Caco-2 (cell line): ENCODE measurements at regions of chr1 and their contacts with region 1.

Region 1: DNA sequence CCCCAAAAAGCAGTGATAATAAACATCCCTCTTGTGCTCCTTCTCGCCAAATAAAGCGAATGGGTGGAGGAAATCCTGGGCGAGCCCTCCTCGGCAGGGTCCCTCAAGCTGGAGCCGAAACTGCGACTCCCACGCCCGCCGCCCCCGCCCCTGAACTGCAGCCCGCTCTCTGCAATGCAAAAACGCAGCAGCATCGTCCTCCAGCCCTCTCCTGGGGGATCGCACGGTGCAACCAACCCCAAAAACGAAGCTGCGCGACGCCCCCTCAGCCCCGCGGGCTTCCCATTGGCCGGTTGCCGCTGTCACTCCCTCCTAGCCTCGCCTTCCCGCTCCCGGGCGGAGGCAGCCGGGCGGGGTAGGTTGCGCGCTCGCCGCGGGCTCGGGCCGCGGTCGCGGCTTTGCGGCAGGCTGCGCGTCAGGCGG is at the start of gene TMCC2:
- DNase-seq: peak; percentile 85 to 87
- H3K4me3 ChIP-seq: peak within 1 kb of the TSS; percentile 66
- H3K4me3 Mint-ChIP-seq: peak within 1 kb of the TSS; percentile 83
- H3K27ac Mint-ChIP-seq: no peak within 1 kb of the TSS
- H3K4me1 ChIP-seq: no peaks in the 10 kb centered on the region
- H3K4me1 Mint-ChIP-seq: peaks cover 7% of the 10 kb centered on the region
- H3K27me3 ChIP-seq: no peaks in the 10 kb centered on the region; the same call in 1 of the 2 replicates
- H3K27me3 Mint-ChIP-seq: peaks cover 5% of the 10 kb centered on the region
- CTCF ChIP-seq: no peak
- total RNA-seq, gene TMCC2: 0.60 and 0.91 TPM in 2 replicates

Region 2: GRCh38 chr1:204588824-204589223 is 638.8 kb before region 1 on chr1:
- CTCF ChIA-PET with region 1: no interaction called
- POLR2A ChIA-PET with region 1: interaction called, 10 read pairs
- intact Hi-C with region 1: no loop called
- DNase-seq: no peak
- H3K4me3 ChIP-seq: no peak overlapping the region
- H3K4me3 Mint-ChIP-seq: no peak overlapping the region
- H3K27ac Mint-ChIP-seq: no peak overlapping the region
- H3K4me1 ChIP-seq: peaks cover 14% of the 10 kb centered on the region
- H3K4me1 Mint-ChIP-seq: peaks cover 15% of the 10 kb centered on the region
- H3K27me3 ChIP-seq: no peaks in the 10 kb centered on the region
- H3K27me3 Mint-ChIP-seq: no peaks in the 10 kb centered on the region
- CTCF ChIP-seq: no peak

Region 3: GRCh38 chr1:205211169-205211838 is 16.3 kb before region 1 on chr1 and contains the start of gene DSTYK:
- CTCF ChIA-PET with region 1: interaction called, 3 read pairs
- POLR2A ChIA-PET with region 1: no interaction called
- intact Hi-C with region 1: loop called (anchors 2 kb)
- DNase-seq: peak; percentile 93 to 94
- H3K4me3 ChIP-seq: peak within 1 kb of the TSS; percentile 89
- H3K4me3 Mint-ChIP-seq: peak within 1 kb of the TSS; percentile 97
- H3K27ac Mint-ChIP-seq: peak within 1 kb of the TSS; percentile 94
- H3K4me1 ChIP-seq: peaks cover 4% of the 10 kb centered on the region; the same call in 1 of the 2 replicates
- H3K4me1 Mint-ChIP-seq: peaks cover 13% of the 10 kb centered on the region
- H3K27me3 ChIP-seq: no peaks in the 10 kb centered on the region
- H3K27me3 Mint-ChIP-seq: no peaks in the 10 kb centered on the region
- CTCF ChIP-seq: no peak
- total RNA-seq, gene DSTYK: 6.2 and 6.3 TPM in 2 replicates

Region 4: GRCh38 chr1:205294175-205294913 is 66.7 kb after region 1 on chr1:
- CTCF ChIA-PET with region 1: no interaction called
- POLR2A ChIA-PET with region 1: no interaction called
- intact Hi-C with region 1: no loop called
- DNase-seq: peak; percentile 74 to 88
- H3K4me3 ChIP-seq: no peak overlapping the region
- H3K4me3 Mint-ChIP-seq: peak overlapping the region; percentile 46
- H3K27ac Mint-ChIP-seq: peak overlapping the region; percentile 97
- H3K4me1 ChIP-seq: peaks cover 79% of the 10 kb centered on the region
- H3K4me1 Mint-ChIP-seq: peaks cover 51% of the 10 kb centered on the region
- H3K27me3 ChIP-seq: no peaks in the 10 kb centered on the region
- H3K27me3 Mint-ChIP-seq: no peaks in the 10 kb centered on the region
- CTCF ChIP-seq: no peak